B cell (primary cell): ENCODE measurements at regions of chr3 and their contacts with region 1.

Region 1: GRCh38 chr3:39288300-39288808 is 8.5 kb upstream of the CX3CR1 start:
- DNase-seq: peak; percentile 94
- ATAC-seq: peak; percentile 99
- H3K4me3 ChIP-seq: no peak overlapping the region
- H3K4me3 Mint-ChIP-seq: no peak overlapping the region
- H3K27ac ChIP-seq: no peak overlapping the region
- H3K27ac Mint-ChIP-seq: peak overlapping the region; percentile 67
- H3K4me1 ChIP-seq: peaks cover 13 to 27% of the 10 kb centered on the region in 2 donors
- H3K4me1 Mint-ChIP-seq: peaks cover 39% of the 10 kb centered on the region
- H3K27me3 ChIP-seq: no peaks in the 10 kb centered on the region
- H3K27me3 Mint-ChIP-seq: no peaks in the 10 kb centered on the region
- CTCF ChIP-seq: peak; percentile 96

Region 2: DNA sequence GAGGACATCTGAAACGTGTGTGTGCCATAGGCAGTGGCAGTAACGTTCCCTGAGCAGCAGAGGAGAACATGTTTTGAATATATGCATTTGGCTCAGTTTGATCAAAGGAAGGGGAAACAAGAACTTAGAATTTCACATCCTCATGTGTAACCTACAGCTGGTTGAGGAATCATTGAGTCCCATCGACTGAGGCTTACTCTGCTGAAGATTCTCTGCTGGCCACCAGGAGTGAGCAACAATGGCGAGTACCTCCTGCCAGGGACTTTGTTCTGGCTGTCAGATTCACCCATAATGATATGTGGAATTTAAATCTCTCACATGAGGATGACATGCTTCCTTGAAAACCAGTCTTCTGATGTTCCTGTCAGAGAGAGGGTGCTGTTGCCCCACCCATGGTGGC is 202.2 kb before region 1 on chr3:
- CTCF ChIA-PET with region 1: interaction called, 20 read pairs
- POLR2A ChIA-PET with region 1: no interaction called
- intact Hi-C with region 1: no loop called
- DNase-seq: peak; percentile 56
- ATAC-seq: peak; percentile 77
- H3K4me3 ChIP-seq: no peak overlapping the region
- H3K4me3 Mint-ChIP-seq: peak overlapping the region; percentile 57
- H3K27ac ChIP-seq: peak overlapping the region in 1 of 2 donors; percentile 35
- H3K27ac Mint-ChIP-seq: peak overlapping the region; percentile 75
- H3K4me1 ChIP-seq: peaks cover 18% of the 10 kb centered on the region in 2 donors
- H3K4me1 Mint-ChIP-seq: peaks cover 23% of the 10 kb centered on the region
- H3K27me3 ChIP-seq: no peaks in the 10 kb centered on the region
- H3K27me3 Mint-ChIP-seq: no peaks in the 10 kb centered on the region
- CTCF ChIP-seq: peak; percentile 22

Region 3: DNA sequence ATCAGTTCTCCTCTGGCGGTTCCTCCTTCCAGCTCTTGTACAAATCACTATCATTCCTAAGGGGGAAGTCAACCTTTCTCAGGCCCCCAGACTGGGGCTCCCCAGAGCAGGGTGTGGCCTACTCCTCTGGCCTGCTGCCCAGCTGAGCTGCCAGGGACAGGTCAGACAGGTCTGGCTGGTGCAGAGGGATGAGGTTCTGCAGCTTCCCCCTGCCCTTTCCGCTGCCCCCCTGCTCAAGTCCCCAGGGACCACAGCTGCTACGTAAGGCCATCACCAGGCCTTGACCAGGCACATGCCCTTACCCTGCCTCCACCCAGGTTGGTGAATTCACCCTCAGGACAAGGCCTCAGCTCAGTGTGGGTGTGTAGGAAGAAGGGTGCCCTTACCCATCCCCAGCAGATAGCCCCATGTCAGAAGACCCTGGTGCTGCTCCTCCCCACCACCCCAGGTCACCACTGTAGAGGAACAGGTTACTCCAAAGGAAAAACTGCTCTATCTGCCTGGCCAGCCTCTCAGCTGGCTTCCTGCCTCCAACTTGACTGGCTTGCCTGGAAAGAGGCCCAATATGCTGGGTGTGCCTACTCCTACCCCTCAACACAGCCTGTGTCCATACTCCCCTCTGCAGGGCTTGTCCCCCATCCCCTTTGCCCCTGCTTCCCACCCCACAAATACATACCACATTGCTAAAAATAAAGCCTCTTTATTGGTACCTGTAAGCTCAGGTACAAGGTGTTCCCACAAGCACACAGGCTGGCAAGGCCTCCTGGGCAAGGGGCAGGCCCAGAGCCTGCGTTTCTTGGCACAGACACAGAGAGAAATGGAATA is 147.0 kb before region 1 on chr3:
- CTCF ChIA-PET with region 1: interaction called, 36 read pairs
- POLR2A ChIA-PET with region 1: no interaction called
- intact Hi-C with region 1: no loop called
- DNase-seq: peak; percentile 41
- ATAC-seq: peak; percentile 44
- H3K4me3 ChIP-seq: no peak overlapping the region
- H3K4me3 Mint-ChIP-seq: peak overlapping the region; percentile 44
- H3K27ac ChIP-seq: peak overlapping the region; percentile 52 to 62
- H3K27ac Mint-ChIP-seq: peak overlapping the region; percentile 86
- H3K4me1 ChIP-seq: peaks cover 29 to 33% of the 10 kb centered on the region in 2 donors
- H3K4me1 Mint-ChIP-seq: peaks cover 43% of the 10 kb centered on the region
- H3K27me3 ChIP-seq: no peaks in the 10 kb centered on the region
- H3K27me3 Mint-ChIP-seq: no peaks in the 10 kb centered on the region
- CTCF ChIP-seq: no peak

Region 4: DNA sequence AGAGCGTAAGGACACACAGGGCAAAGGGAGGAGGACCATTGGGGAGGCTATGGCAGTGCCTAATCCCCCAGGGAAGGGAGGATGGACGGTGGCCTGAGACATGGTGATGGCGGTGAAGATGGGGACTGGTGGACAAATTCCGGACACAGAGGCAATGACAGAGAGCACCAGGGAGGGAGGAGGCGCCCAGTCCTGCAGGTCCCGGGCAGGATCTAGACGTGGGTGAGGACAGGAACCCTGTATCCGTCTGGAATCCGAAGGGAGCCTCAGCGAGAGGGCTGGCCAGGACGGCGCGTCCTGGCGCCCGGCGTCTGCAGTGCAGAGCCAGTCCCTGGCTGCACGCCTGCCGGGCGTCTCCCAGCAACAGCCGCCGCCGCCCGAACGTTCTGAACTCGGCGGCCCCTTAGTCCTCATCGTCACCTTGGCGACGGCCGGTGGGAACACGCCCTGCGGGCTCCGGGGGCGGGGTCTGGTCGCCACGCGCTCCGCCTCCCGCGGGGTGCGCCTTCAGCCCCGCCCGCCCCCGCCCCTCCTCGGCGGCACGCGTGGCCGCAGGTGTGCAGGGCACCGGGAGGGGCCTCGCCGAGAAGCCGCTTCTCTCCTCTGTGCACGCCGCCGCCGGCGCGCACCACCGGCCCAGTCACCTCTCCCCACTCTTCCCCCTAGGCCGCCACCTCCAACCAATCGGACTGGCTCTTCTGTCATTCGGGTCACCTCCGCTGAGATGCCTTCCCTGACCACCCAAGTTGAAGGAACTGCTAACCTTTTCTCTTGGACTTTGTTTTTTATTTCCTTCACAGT is 107.6 kb before region 1 on chr3:
- CTCF ChIA-PET with region 1: interaction called, 1,573 read pairs
- POLR2A ChIA-PET with region 1: interaction called, 8 read pairs
- intact Hi-C with region 1: loop called (anchors 2 kb)
- DNase-seq: peak; percentile 95
- ATAC-seq: peak; percentile 85
- H3K4me3 ChIP-seq: peak overlapping the region; percentile 6 to 51 (median 37)
- H3K4me3 Mint-ChIP-seq: peak overlapping the region; percentile 82
- H3K27ac ChIP-seq: peak overlapping the region; percentile 9 to 47
- H3K27ac Mint-ChIP-seq: peak overlapping the region; percentile 72
- H3K4me1 ChIP-seq: peaks cover 23 to 35% of the 10 kb centered on the region in 2 donors
- H3K4me1 Mint-ChIP-seq: peaks cover 32% of the 10 kb centered on the region
- H3K27me3 ChIP-seq: no peaks in the 10 kb centered on the region
- H3K27me3 Mint-ChIP-seq: no peaks in the 10 kb centered on the region
- CTCF ChIP-seq: no peak

Region 5: DNA sequence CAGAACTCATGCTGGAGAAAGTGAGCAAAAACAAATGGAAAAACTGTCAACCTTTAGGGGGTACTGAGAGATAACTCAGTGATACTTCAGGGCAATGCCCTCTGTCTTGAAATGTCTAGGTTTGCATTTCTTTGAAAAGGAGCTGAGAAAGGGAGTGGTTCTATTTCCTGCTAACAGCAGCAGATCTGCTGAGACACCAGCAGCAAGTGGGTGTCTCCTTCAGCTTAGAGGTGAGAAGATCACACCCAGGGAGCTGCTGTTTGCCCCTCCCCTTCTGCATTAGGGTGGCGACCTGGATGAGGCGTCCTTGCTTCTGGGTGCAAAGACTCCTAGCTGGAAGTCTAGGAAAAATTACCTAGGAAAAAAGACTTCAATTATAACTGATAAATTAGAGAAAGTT is 53.6 kb before region 1 on chr3:
- CTCF ChIA-PET with region 1: interaction called, 15 read pairs
- POLR2A ChIA-PET with region 1: interaction called, 4 read pairs
- intact Hi-C with region 1: no loop called
- DNase-seq: no peak
- ATAC-seq: no peak
- H3K4me3 ChIP-seq: no peak overlapping the region
- H3K4me3 Mint-ChIP-seq: peak overlapping the region; percentile 14
- H3K27ac ChIP-seq: no peak overlapping the region
- H3K27ac Mint-ChIP-seq: no peak overlapping the region
- H3K4me1 ChIP-seq: peaks cover 23 to 25% of the 10 kb centered on the region in 2 donors
- H3K4me1 Mint-ChIP-seq: peaks cover 31% of the 10 kb centered on the region
- H3K27me3 ChIP-seq: no peaks in the 10 kb centered on the region
- H3K27me3 Mint-ChIP-seq: peaks cover 14% of the 10 kb centered on the region
- CTCF ChIP-seq: no peak

Region 6: GRCh38 chr3:39267631-39268548 is 20.5 kb before region 1 on chr3:
- CTCF ChIA-PET with region 1: interaction called, 38 read pairs
- POLR2A ChIA-PET with region 1: no interaction called
- intact Hi-C with region 1: no loop called
- DNase-seq: no peak
- ATAC-seq: no peak
- H3K4me3 ChIP-seq: no peak overlapping the region
- H3K4me3 Mint-ChIP-seq: no peak overlapping the region
- H3K27ac ChIP-seq: no peak overlapping the region
- H3K27ac Mint-ChIP-seq: no peak overlapping the region
- H3K4me1 ChIP-seq: peaks cover 28% of the 10 kb centered on the region in 2 donors
- H3K4me1 Mint-ChIP-seq: peaks cover 35% of the 10 kb centered on the region
- H3K27me3 ChIP-seq: no peaks in the 10 kb centered on the region
- H3K27me3 Mint-ChIP-seq: no peaks in the 10 kb centered on the region
- CTCF ChIP-seq: no peak

Region 7: GRCh38 chr3:39468108-39468436 is 179.7 kb after region 1 on chr3:
- CTCF ChIA-PET with region 1: no interaction called
- POLR2A ChIA-PET with region 1: no interaction called
- intact Hi-C with region 1: no loop called
- DNase-seq: no peak
- ATAC-seq: no peak
- H3K4me3 ChIP-seq: no peak overlapping the region
- H3K4me3 Mint-ChIP-seq: no peak overlapping the region
- H3K27ac ChIP-seq: no peak overlapping the region
- H3K27ac Mint-ChIP-seq: no peak overlapping the region
- H3K4me1 ChIP-seq: no peaks in the 10 kb centered on the region
- H3K4me1 Mint-ChIP-seq: no peaks in the 10 kb centered on the region
- H3K27me3 ChIP-seq: no peaks in the 10 kb centered on the region
- H3K27me3 Mint-ChIP-seq: peaks cover 22% of the 10 kb centered on the region
- CTCF ChIP-seq: no peak